ENCODE measurements at regions of chr17 and their contacts with region 1.

Region 1: GRCh38 chr17:64129764-64130558 is at the start of gene ERN1:
- DNase-seq: peak; percentile 88
- H3K4me3 Mint-ChIP-seq: peak within 1 kb of the TSS; percentile 98
- H3K27ac Mint-ChIP-seq: peak within 1 kb of the TSS; percentile 93
- H3K4me1 Mint-ChIP-seq: peaks cover 68% of the 10 kb centered on the region
- H3K27me3 Mint-ChIP-seq: no peaks in the 10 kb centered on the region
- total RNA-seq, gene ERN1: 90.0 and 91.6 TPM in 2 replicates

Region 2: DNA sequence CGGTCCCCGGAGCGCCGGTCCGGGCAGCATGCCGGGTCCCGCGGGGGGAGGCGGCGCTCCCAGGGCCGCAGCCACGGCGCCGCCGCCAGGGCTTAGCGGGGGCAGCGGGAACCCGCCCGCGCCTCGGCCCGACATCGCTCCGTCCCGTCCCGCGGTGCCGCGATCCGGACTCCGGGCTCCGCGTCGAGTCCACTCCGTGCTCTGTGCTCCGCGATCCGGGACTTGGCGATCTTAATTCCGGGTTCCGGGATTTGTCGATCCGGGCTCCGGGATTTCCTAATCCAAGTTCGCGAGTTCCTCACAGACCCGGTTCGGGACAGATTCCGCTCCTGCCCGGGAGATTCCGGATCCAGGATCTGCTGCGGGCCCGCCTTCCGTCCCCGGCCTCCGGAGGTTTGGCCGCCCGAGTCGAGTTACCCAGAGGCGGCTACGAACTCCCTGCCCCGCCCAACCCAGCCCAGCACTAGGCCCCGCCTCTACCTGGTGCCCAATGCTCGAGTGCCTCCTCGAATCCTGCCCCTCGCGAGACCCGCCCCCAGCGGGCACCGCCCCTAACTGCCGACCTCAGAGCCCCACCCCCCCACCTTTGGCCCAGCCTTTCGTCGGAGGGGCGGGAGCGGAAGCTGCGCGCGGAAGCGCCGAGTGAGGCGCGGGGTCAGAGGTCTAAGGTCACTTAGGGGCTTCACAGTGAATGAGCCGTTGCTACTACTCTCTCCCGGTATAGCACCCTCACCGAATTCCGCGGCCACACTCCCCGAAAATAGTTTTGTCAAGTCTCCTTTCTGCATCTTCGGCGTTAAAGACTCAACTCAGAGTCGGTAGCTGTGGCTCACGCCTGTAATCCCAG is 287.2 kb before region 1 on chr17 and contains the start of gene SMARCD2:
- intact Hi-C with region 1: loop called (anchors 1 kb)
- DNase-seq: peak; percentile 98
- H3K4me3 Mint-ChIP-seq: peak within 1 kb of the TSS; percentile 96
- H3K27ac Mint-ChIP-seq: peak within 1 kb of the TSS; percentile 91
- H3K4me1 Mint-ChIP-seq: peaks cover 39% of the 10 kb centered on the region
- H3K27me3 Mint-ChIP-seq: no peaks in the 10 kb centered on the region
- total RNA-seq, gene SMARCD2: 116 TPM in 2 replicates

Region 3: GRCh38 chr17:64025732-64026294 is 104.1 kb before region 1 on chr17:
- intact Hi-C with region 1: loop called (anchors 1 kb)
- DNase-seq: peak; percentile 85
- H3K4me3 Mint-ChIP-seq: peak overlapping the region; percentile 80
- H3K27ac Mint-ChIP-seq: peak overlapping the region; percentile 88
- H3K4me1 Mint-ChIP-seq: peaks cover 70% of the 10 kb centered on the region
- H3K27me3 Mint-ChIP-seq: no peaks in the 10 kb centered on the region

Region 4: GRCh38 chr17:64081802-64082799 is 47.9 kb before region 1 on chr17:
- intact Hi-C with region 1: loop called (anchors 1 kb)
- DNase-seq: peak; percentile 53
- H3K4me3 Mint-ChIP-seq: peak overlapping the region; percentile 60
- H3K27ac Mint-ChIP-seq: no peak overlapping the region
- H3K4me1 Mint-ChIP-seq: peaks cover 8% of the 10 kb centered on the region
- H3K27me3 Mint-ChIP-seq: no peaks in the 10 kb centered on the region

Region 5: DNA sequence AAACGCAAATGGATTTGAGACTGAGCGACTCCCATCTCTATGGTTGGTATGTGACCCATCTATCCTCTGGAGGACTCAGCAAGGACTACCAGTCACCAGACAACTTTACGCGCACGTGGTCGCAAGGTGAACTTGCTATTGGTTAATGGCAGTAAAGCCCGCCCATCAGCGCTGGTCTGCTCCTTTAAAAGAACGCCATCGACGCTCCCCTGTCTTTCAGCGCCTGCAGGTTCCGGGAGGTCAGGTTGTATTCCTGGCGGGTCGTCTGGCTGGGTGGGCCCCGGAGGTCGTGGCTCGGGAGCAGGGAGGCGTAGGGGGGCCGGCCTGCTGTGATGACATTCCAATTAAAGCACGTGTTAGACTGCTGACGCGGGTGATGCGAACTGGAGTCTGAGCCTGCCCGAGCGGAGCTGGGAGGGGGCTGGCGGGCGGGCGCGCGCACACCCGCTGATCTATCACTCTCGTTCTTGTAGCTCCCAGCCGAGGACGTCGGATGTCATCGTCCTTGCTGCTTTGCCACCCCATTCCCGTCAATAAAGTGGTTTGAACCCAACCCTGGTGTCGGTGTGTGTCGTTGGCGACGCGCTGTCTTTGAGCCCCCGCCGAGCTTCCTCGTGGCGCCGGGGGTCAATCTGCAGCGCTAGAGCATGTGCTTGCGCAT is 15.9 kb after region 1 on chr17:
- intact Hi-C with region 1: loop called (anchors 1 kb)
- DNase-seq: peak; percentile 93
- H3K4me3 Mint-ChIP-seq: no peak overlapping the region
- H3K27ac Mint-ChIP-seq: no peak overlapping the region
- H3K4me1 Mint-ChIP-seq: peaks cover 19% of the 10 kb centered on the region
- H3K27me3 Mint-ChIP-seq: peaks cover 2% of the 10 kb centered on the region

Measured in activated T-helper 1 cell treated with anti-CD3 and anti-CD28 coated beads, Interleukin-12 subunit alpha, Interleukin-12 subunit beta, Interleukin-2, Interleukin-4 antibody, amounts not matched to agents 30 ng/mL and 10 ng/mL and 1 ng/mL, durations not matched to agents 14 hours and 24 hours and 36 hours (primary cell).